GM12878 (cell line): ENCODE measurements at regions of chr12 and their contacts with region 1.

Region 1: DNA sequence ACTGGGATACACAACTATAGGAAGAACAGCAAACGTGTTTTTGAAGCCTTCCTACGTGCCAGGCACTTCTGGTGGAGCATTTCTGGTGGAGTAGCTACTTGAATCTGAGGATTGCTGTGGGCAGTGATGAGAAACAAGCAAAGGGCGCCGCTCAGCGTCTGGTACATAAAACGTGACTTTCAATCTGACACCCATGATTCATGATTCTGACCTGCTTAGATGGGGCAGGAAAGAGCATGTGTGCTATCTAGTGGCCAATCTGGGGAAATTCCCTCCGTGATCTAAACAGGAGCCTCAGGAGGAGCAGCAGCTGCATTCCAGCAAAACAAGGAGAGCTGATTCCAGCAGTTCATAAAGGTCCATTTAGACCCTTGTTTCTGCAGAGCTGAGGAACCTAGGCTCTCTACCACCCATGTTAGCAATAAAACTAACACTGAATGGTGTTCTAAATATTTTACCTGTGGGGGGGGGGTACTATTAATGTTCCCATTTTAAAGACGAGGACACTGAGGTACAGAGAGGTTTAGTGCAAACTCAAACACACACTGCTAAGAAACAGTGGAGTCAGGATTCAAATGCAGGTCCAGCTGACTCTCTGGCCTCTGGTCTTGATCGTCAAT is 37.8 kb downstream of the PAH start:
- DNase-seq: peak; percentile 51
- ATAC-seq: peak; percentile 88
- H3K4me3 ChIP-seq: no peak overlapping the region
- H3K27ac ChIP-seq: no peak overlapping the region
- H3K4me1 ChIP-seq: no peaks in the 10 kb centered on the region; the same call in 1 of the 2 replicates
- H3K27me3 ChIP-seq: no peaks in the 10 kb centered on the region
- CTCF ChIP-seq: peak; percentile 47 to 79 (median 73); a peak in 5 of 6 replicates
- EP300 ChIP-seq: no peak
- POLR2A ChIP-seq: no peak
- RAD21 ChIP-seq: peak; percentile 71

Region 2: DNA sequence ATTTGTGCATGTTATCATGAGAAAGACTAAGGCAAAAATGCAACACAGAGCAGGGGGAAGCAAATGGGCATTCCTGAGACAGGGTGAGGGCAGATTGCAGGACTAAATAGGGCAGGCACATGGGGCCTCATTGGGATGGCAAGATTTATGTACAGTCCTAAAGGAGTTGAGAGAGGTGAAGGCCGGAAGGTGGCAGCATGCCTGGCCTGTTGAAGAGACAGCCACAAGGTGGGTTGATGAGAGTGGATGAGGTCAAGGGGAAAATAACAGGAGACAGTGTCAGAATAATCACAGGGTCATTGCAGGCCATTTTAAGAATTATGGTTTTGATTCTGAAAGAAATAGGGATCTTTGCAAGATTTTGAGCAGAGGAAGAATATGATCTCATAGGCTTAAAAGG is 16.8 kb after region 1 on chr12:
- CTCF ChIA-PET with region 1: interaction called, 60 read pairs
- POLR2A ChIA-PET with region 1: interaction called, 5 read pairs
- RAD21 ChIA-PET with region 1: interaction called, 17 read pairs
- SMC1A ChIA-PET with region 1: interaction called, 39 read pairs
- in situ Hi-C with region 1: no loop called
- intact Hi-C with region 1: no loop called
- DNase-seq: no peak
- ATAC-seq: peak; percentile 81
- H3K4me3 ChIP-seq: no peak overlapping the region
- H3K27ac ChIP-seq: no peak overlapping the region
- H3K4me1 ChIP-seq: no peaks in the 10 kb centered on the region
- H3K27me3 ChIP-seq: 0 out of 4 replicates have a peak, but pooled peaks cover 0 to 2% of the 10 kb centered on the region in 2 experiments
- CTCF ChIP-seq: peak in 2 of 3 experiments; percentile 13 to 34; a peak in 2 of 6 replicates
- EP300 ChIP-seq: no peak
- POLR2A ChIP-seq: no peak
- RAD21 ChIP-seq: no peak

Region 3: GRCh38 chr12:102927220-102927619 is 48.0 kb after region 1 on chr12:
- CTCF ChIA-PET with region 1: interaction called, 13 read pairs
- POLR2A ChIA-PET with region 1: no interaction called
- RAD21 ChIA-PET with region 1: interaction called, 4 read pairs
- SMC1A ChIA-PET with region 1: interaction called, 4 read pairs
- in situ Hi-C with region 1: no loop called
- intact Hi-C with region 1: no loop called
- DNase-seq: no peak
- ATAC-seq: no peak
- H3K4me3 ChIP-seq: no peak overlapping the region
- H3K27ac ChIP-seq: no peak overlapping the region
- H3K4me1 ChIP-seq: no peaks in the 10 kb centered on the region
- H3K27me3 ChIP-seq: no peaks in the 10 kb centered on the region; a peak in 1 of 4 replicates
- CTCF ChIP-seq: no peak
- EP300 ChIP-seq: no peak
- POLR2A ChIP-seq: no peak
- RAD21 ChIP-seq: no peak

Region 4: DNA sequence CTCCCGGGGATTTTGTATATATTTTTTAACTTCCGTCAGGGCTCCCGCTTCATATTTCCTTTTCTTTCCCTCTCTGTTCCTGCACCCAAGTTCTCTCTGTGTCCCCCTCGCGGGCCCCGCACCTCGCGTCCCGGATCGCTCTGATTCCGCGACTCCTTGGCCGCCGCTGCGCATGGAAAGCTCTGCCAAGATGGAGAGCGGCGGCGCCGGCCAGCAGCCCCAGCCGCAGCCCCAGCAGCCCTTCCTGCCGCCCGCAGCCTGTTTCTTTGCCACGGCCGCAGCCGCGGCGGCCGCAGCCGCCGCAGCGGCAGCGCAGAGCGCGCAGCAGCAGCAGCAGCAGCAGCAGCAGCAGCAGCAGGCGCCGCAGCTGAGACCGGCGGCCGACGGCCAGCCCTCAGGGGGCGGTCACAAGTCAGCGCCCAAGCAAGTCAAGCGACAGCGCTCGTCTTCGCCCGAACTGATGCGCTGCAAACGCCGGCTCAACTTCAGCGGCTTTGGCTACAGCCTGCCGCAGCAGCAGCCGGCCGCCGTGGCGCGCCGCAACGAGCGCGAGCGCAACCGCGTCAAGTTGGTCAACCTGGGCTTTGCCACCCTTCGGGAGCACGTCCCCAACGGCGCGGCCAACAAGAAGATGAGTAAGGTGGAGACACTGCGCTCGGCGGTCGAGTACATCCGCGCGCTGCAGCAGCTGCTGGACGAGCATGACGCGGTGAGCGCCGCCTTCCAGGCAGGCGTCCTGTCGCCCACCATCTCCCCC is 79.0 kb after region 1 on chr12:
- CTCF ChIA-PET with region 1: interaction called, 4 read pairs
- POLR2A ChIA-PET with region 1: interaction called, 3 read pairs
- RAD21 ChIA-PET with region 1: interaction called, 8 read pairs
- SMC1A ChIA-PET with region 1: interaction called, 14 read pairs
- in situ Hi-C with region 1: no loop called
- intact Hi-C with region 1: no loop called
- DNase-seq: no peak
- ATAC-seq: peak; percentile 72
- H3K4me3 ChIP-seq: peak overlapping the region; percentile 81
- H3K27ac ChIP-seq: no peak overlapping the region
- H3K4me1 ChIP-seq: peaks cover 8% of the 10 kb centered on the region
- H3K27me3 ChIP-seq: peaks cover 0 to 24% of the 10 kb centered on the region in 2 experiments; a peak in 2 of 4 replicates
- CTCF ChIP-seq: peak in 2 of 3 experiments; percentile 7 to 15; a peak in 2 of 6 replicates
- EP300 ChIP-seq: no peak; a peak in 1 of 4 replicates
- POLR2A ChIP-seq: no peak
- RAD21 ChIP-seq: no peak

Region 5: GRCh38 chr12:103181366-103182152 is 302.3 kb after region 1 on chr12:
- CTCF ChIA-PET with region 1: interaction called, 27 read pairs
- POLR2A ChIA-PET with region 1: no interaction called
- RAD21 ChIA-PET with region 1: interaction called, 16 read pairs
- SMC1A ChIA-PET with region 1: interaction called, 25 read pairs
- in situ Hi-C with region 1: no loop called
- intact Hi-C with region 1: no loop called
- DNase-seq: peak; percentile 88
- ATAC-seq: peak; percentile 96
- H3K4me3 ChIP-seq: no peak overlapping the region
- H3K27ac ChIP-seq: peak overlapping the region; percentile 45; the same call in 1 of the 2 replicates
- H3K4me1 ChIP-seq: no peaks in the 10 kb centered on the region
- H3K27me3 ChIP-seq: no peaks in the 10 kb centered on the region
- CTCF ChIP-seq: peak in 2 of 3 experiments; percentile 6 to 49; a peak in 2 of 6 replicates
- EP300 ChIP-seq: peak in 1 of 2 experiments; percentile 68; a peak in 2 of 4 replicates
- POLR2A ChIP-seq: no peak
- RAD21 ChIP-seq: peak; percentile 71

Region 6: GRCh38 chr12:103382736-103383346 is 503.6 kb after region 1 on chr12:
- CTCF ChIA-PET with region 1: no interaction called
- POLR2A ChIA-PET with region 1: no interaction called
- RAD21 ChIA-PET with region 1: no interaction called
- SMC1A ChIA-PET with region 1: no interaction called
- in situ Hi-C with region 1: no loop called
- intact Hi-C with region 1: no loop called
- DNase-seq: no peak
- ATAC-seq: no peak
- H3K4me3 ChIP-seq: no peak overlapping the region
- H3K27ac ChIP-seq: no peak overlapping the region
- H3K4me1 ChIP-seq: no peaks in the 10 kb centered on the region
- H3K27me3 ChIP-seq: no peaks in the 10 kb centered on the region
- CTCF ChIP-seq: no peak
- EP300 ChIP-seq: no peak
- POLR2A ChIP-seq: no peak
- RAD21 ChIP-seq: no peak

Region 7: DNA sequence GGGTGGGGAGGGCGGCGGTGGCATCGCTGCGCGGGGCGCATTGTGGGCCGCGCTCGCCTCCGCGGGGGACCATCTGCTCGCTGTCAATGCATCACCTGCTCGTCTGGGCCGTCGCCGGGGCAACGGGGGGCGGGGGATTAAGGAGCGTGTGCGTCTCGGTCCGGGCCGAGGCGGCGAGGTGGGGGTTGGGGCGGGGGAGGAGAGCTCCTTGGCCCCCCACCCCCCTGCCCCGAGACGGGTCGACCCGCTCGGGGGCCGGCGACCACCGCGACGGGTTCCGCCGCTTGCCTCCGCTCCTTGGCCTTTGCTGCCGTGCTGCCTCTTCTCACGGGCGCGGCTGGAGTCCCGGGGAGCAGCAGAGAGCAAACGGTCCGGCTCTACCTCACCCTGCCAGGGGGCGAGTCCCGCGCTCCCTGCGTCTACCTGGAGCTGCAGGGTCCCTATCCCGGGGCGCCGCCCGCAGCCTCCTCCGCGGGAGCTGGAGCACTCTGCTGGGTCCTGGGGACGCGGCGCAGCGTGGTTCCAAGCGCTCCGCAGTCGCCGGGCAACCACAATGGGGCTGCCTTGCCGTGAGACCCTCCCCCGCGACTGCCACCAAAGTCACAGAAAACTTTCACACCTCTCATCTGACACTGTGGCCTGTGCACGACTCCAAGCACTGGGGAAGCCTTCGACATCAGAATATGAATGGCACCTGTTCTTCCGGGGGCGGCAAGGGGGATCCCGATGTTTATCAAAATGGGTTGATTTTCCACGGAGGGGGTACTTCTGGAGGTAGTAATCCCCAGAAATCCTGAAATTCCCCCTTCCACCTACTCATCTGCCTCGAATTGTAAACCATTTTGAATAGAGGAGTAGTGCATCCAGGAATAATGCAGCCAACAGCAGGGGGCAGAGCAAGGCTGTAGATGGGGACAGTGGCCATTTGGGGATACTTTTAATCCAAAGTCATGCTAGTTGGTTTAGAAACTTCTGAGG is 616.5 kb after region 1 on chr12 and contains the start of gene C12orf42:
- CTCF ChIA-PET with region 1: interaction called, 12 read pairs
- POLR2A ChIA-PET with region 1: no interaction called
- RAD21 ChIA-PET with region 1: interaction called, 9 read pairs
- SMC1A ChIA-PET with region 1: interaction called, 24 read pairs
- in situ Hi-C with region 1: no loop called
- intact Hi-C with region 1: loop called (anchors 2 kb)
- DNase-seq: peak; percentile 63
- ATAC-seq: peak; percentile 88
- H3K4me3 ChIP-seq: peak within 1 kb of the TSS; percentile 72
- H3K27ac ChIP-seq: 0 out of 2 replicates have a peak within 1 kb of the TSS, but pooled peaks have one; percentile 12
- H3K4me1 ChIP-seq: peaks cover 8% of the 10 kb centered on the region; the same call in 1 of the 2 replicates
- H3K27me3 ChIP-seq: no peaks in the 10 kb centered on the region
- CTCF ChIP-seq: peak; percentile 70 to 85 (median 71)
- EP300 ChIP-seq: peak in 1 of 2 experiments; percentile 42; a peak in 1 of 4 replicates
- POLR2A ChIP-seq: no peak
- RAD21 ChIP-seq: peak; percentile 81
- polyA plus RNA-seq, gene C12orf42: 1.8 to 1.9 TPM

Region 8: DNA sequence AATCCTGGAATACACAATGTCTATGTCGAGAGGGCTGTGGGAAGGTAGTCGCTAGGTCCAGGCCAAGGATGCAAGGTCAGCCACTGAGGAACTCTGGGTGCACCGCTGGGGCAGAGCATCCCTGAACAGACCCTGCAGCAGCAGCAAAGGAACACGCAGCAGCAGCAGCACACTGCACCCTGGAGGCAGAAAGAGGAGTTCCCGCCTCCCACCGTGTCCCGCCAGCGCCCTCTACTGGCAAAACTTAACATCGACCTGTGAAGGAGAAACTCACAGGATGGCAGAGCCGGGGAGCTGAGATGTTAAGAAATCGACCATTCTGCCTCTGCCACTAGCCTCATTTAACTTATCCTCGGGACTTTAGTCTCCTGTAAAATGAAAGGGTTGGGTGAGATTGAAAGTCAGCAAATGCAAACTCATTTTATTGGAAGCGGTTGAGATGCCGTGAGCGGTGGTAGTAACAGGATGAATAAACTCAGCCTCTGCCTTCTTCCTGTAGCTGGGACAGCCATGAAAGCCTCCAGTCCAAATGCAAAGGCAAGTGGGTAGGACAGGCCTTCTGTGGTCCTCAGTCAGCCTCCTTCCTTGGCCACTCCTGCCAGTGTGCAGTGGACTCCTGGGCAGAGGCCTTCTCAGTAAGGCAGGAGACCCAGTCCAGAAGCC is 753.4 kb after region 1 on chr12:
- CTCF ChIA-PET with region 1: interaction called, 12 read pairs
- POLR2A ChIA-PET with region 1: no interaction called
- RAD21 ChIA-PET with region 1: interaction called, 6 read pairs
- SMC1A ChIA-PET with region 1: interaction called, 19 read pairs
- in situ Hi-C with region 1: no loop called
- intact Hi-C with region 1: loop called (anchors 1 kb)
- DNase-seq: peak; percentile 31
- ATAC-seq: peak; percentile 98
- H3K4me3 ChIP-seq: no peak overlapping the region
- H3K27ac ChIP-seq: no peak overlapping the region
- H3K4me1 ChIP-seq: no peaks in the 10 kb centered on the region
- H3K27me3 ChIP-seq: no peaks in the 10 kb centered on the region; a peak in 1 of 4 replicates
- CTCF ChIP-seq: peak; percentile 100; a peak in 5 of 6 replicates
- EP300 ChIP-seq: no peak
- POLR2A ChIP-seq: no peak
- RAD21 ChIP-seq: peak; percentile 95